GM23248 (cell line): ENCODE measurements at regions of chr16 and their contacts with region 1.

Region 1: GRCh38 chr16:66406534-66407221 is 20.4 kb upstream of the BEAN1 start:
- DNase-seq: peak; percentile 89
- H3K4me3 ChIP-seq: peak overlapping the region; percentile 78
- H3K27ac ChIP-seq: no peak overlapping the region
- H3K4me1 ChIP-seq: peaks cover 20% of the 10 kb centered on the region
- H3K27me3 ChIP-seq: peaks cover 10% of the 10 kb centered on the region

Region 2: DNA sequence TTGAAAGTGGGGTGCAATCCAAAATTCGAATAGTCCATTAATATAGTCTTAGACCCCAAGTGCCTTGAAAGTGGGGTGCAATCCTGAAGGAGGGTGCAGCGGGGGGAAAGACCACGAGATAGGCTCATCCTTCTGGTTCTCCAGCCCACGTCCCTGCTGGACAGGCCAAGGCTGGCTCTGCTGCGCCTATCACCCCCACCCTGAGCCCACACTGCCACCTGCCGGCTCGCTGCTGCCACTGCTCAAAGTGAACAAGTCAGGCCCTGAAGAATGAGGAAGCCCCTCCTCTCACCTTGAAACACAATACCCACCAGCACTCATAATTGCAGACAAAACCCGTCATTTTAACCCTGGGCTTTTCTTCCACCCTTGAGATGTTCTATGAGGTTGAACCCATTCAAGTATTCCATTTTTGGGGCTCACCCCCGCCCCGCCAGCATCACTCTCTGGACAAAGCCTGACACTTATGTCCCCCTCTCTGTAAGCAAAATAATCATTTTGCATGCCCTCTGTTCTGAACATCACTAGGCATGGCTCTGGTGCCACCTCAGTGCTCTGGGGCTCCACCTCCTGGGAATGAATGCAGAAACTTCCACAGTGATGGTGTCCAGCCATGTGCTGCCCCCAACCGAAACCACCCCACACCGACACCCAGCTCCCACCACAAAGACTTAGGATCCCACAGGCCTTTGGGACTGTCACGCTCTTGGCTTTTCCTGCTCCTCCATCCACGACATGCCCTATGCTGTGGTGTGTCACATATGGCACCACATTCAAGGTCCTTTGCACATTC is 77.2 kb after region 1 on chr16:
- in situ Hi-C with region 1: loop called (anchors 10 kb)
- DNase-seq: peak; percentile 79
- H3K4me3 ChIP-seq: no peak overlapping the region
- H3K27ac ChIP-seq: no peak overlapping the region
- H3K4me1 ChIP-seq: peaks cover 10% of the 10 kb centered on the region
- H3K27me3 ChIP-seq: no peaks in the 10 kb centered on the region

Region 3: GRCh38 chr16:66872943-66873684 is 466.4 kb after region 1 on chr16:
- in situ Hi-C with region 1: loop called (anchors 25 kb)
- DNase-seq: peak; percentile 100
- H3K4me3 ChIP-seq: peak overlapping the region; percentile 66
- H3K27ac ChIP-seq: peak overlapping the region; percentile 57
- H3K4me1 ChIP-seq: peaks cover 17% of the 10 kb centered on the region
- H3K27me3 ChIP-seq: no peaks in the 10 kb centered on the region